ENCODE measurements at regions of chr3 and their contacts with region 1.

Region 1: GRCh38 chr3:191051037-191051436 is 148.0 kb upstream of the OSTN start:
- DNase-seq: peak; percentile 78
- ATAC-seq: peak; percentile 78
- H3K4me3 ChIP-seq: no peak overlapping the region
- H3K27ac ChIP-seq: no peak overlapping the region
- H3K4me1 ChIP-seq: no peaks in the 10 kb centered on the region
- H3K27me3 ChIP-seq: no peaks in the 10 kb centered on the region
- CTCF ChIP-seq: peak; percentile 71

Region 2: DNA sequence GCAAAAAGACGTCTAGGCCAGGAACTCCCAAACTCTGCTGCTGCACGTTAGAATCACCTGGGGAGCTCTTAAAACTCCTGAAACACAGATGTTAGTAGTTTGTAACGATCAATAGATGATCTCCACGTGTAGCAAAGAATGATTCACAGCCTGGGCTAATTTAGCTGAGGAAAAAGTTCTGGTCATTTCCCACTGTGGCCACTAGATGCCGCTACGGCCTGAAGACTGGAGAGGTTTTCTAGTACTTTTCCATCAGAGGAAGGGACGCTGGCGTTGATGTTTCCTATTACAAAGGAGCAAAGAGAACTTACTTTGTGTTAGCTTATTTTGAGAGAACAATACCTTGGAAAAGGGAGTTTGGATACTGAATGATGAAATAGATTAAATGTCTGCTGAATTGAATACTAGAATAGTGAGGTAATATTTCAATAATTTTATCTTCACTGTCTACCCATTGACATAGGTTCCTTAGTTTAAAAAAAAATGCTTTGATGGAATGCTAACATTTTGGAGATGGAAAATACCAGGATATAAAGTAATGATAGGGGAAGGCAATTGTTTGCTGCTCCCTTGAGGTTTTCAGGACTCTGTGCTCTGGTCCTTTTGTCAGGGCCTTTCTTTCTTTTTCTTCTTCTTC is 1089.4 kb before region 1 on chr3:
- CTCF ChIA-PET with region 1: no interaction called
- POLR2A ChIA-PET with region 1: no interaction called
- intact Hi-C with region 1: loop called (anchors 10 kb)
- DNase-seq: peak; percentile 95
- ATAC-seq: peak; percentile 82
- H3K4me3 ChIP-seq: no peak overlapping the region
- H3K27ac ChIP-seq: no peak overlapping the region
- H3K4me1 ChIP-seq: peaks cover 4% of the 10 kb centered on the region; the same call in 1 of the 2 replicates
- H3K27me3 ChIP-seq: no peaks in the 10 kb centered on the region
- CTCF ChIP-seq: peak; percentile 95

Region 3: GRCh38 chr3:190811775-190812480 is 239.1 kb before region 1 on chr3:
- CTCF ChIA-PET with region 1: interaction called, 3 read pairs
- POLR2A ChIA-PET with region 1: no interaction called
- intact Hi-C with region 1: loop called (anchors 1 kb)
- DNase-seq: peak; percentile 83
- ATAC-seq: peak; percentile 80
- H3K4me3 ChIP-seq: peak overlapping the region; percentile 57
- H3K27ac ChIP-seq: no peak overlapping the region
- H3K4me1 ChIP-seq: peaks cover 10% of the 10 kb centered on the region
- H3K27me3 ChIP-seq: no peaks in the 10 kb centered on the region
- CTCF ChIP-seq: peak; percentile 91

Region 4: DNA sequence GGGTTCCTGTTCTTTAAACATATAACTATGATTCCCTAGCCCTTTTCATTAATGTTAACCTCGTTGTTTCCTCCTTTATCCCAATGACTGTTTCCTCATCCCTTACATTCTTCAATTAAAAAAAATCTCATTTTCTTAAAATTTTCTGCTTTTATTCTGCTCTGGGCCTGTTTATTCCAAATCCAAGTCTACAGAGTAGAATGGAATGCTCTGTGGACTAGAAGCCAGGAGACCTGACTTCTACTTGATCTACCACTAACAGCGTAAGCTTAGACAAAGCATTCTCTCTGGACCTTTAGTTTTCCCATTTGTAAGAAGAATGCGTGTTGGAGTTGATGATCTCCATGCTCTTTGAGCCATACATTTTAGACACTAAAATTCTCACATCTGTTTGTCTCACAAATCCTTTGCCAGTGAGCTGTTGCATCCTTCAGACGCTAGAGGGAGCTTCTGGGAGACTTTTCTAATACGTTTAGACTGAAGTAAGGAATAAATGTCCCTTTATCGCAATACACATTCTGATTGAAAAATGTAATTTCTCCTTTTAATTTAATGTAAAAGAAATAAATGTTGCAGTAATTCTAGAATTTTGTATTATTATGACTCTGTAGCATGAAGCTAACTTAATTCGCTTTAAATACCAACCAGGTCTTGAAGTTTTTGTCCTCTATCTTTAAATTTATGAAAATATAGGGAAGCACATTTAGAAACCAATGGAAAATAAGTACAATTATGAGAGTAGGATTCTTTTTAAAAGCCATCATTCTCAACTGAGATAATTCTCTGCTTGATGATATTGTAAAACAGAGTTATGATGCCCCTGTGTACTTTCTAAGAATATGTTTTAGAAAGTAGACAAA is 166.8 kb before region 1 on chr3:
- CTCF ChIA-PET with region 1: interaction called, 10 read pairs
- POLR2A ChIA-PET with region 1: no interaction called
- intact Hi-C with region 1: loop called (anchors 1 kb)
- DNase-seq: peak; percentile 88
- ATAC-seq: peak; percentile 89
- H3K4me3 ChIP-seq: peak overlapping the region; percentile 35; the same call in 1 of the 2 replicates
- H3K27ac ChIP-seq: no peak overlapping the region
- H3K4me1 ChIP-seq: no peaks in the 10 kb centered on the region
- H3K27me3 ChIP-seq: no peaks in the 10 kb centered on the region
- CTCF ChIP-seq: peak; percentile 96

Region 5: GRCh38 chr3:190983875-190984274 is 67.2 kb before region 1 on chr3:
- CTCF ChIA-PET with region 1: no interaction called
- POLR2A ChIA-PET with region 1: no interaction called
- intact Hi-C with region 1: no loop called
- DNase-seq: no peak
- ATAC-seq: peak; percentile 22; the same call in 1 of the 2 replicates
- H3K4me3 ChIP-seq: no peak overlapping the region
- H3K27ac ChIP-seq: no peak overlapping the region
- H3K4me1 ChIP-seq: no peaks in the 10 kb centered on the region
- H3K27me3 ChIP-seq: no peaks in the 10 kb centered on the region
- CTCF ChIP-seq: no peak

Region 6: GRCh38 chr3:191235331-191236314 is 184.6 kb after region 1 on chr3:
- CTCF ChIA-PET with region 1: no interaction called
- POLR2A ChIA-PET with region 1: no interaction called
- intact Hi-C with region 1: loop called (anchors 5 kb)
- DNase-seq: peak; percentile 57
- ATAC-seq: no peak
- H3K4me3 ChIP-seq: no peak overlapping the region
- H3K27ac ChIP-seq: peak overlapping the region; percentile 94
- H3K4me1 ChIP-seq: peaks cover 57% of the 10 kb centered on the region
- H3K27me3 ChIP-seq: no peaks in the 10 kb centered on the region
- CTCF ChIP-seq: no peak

Region 7: DNA sequence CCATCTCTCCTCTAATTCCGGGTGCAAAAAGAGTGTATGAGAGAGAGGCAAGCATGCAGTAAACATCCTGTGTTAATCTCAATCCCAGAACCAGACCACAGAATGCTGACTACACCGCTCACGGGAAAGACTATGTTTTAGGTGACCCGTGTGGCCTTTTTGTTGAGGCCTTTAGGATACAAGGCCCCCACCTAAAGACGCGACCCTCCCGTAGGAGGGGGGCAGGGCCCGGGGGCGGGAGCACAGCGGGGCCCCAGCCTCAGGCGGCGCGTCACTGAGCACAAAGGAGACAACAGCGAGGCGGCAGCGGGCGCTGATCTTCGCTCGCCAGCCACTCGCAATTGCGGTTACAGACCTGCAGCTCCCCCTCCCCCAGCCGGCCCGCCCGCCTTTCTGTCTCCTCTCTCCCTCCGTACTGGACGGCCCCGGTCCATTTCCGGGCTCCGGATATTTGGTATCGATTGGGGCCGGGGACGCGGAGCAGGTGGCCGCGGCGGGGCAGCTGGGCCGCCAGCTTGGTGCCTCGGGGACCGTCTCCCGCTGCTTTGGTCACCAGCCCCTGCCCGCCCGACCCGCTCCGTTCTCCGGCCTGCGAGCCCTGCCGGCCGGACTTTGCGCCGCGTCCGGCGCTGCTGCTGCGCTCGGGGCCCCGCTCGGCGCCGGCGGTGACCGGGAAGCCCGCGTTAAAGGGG is 278.1 kb after region 1 on chr3 and contains the start of gene CCDC50:
- CTCF ChIA-PET with region 1: no interaction called
- POLR2A ChIA-PET with region 1: no interaction called
- intact Hi-C with region 1: no loop called
- DNase-seq: peak; percentile 72
- ATAC-seq: peak; percentile 60
- H3K4me3 ChIP-seq: peak within 1 kb of the TSS; percentile 84
- H3K27ac ChIP-seq: peak within 1 kb of the TSS; percentile 72
- H3K4me1 ChIP-seq: peaks cover 39% of the 10 kb centered on the region
- H3K27me3 ChIP-seq: no peaks in the 10 kb centered on the region
- CTCF ChIP-seq: no peak
- total RNA-seq, gene CCDC50: 68.4 and 80.9 TPM in 2 replicates

Region 8: GRCh38 chr3:191388823-191389222 is 337.8 kb after region 1 on chr3:
- CTCF ChIA-PET with region 1: no interaction called
- POLR2A ChIA-PET with region 1: no interaction called
- intact Hi-C with region 1: loop called (anchors 2 kb)
- DNase-seq: peak; percentile 42
- ATAC-seq: no peak
- H3K4me3 ChIP-seq: no peak overlapping the region
- H3K27ac ChIP-seq: no peak overlapping the region
- H3K4me1 ChIP-seq: no peaks in the 10 kb centered on the region; the same call in 1 of the 2 replicates
- H3K27me3 ChIP-seq: no peaks in the 10 kb centered on the region
- CTCF ChIP-seq: peak; percentile 45